ENCODE measurements at regions of chr7 and their contacts with region 1.

Region 1: DNA sequence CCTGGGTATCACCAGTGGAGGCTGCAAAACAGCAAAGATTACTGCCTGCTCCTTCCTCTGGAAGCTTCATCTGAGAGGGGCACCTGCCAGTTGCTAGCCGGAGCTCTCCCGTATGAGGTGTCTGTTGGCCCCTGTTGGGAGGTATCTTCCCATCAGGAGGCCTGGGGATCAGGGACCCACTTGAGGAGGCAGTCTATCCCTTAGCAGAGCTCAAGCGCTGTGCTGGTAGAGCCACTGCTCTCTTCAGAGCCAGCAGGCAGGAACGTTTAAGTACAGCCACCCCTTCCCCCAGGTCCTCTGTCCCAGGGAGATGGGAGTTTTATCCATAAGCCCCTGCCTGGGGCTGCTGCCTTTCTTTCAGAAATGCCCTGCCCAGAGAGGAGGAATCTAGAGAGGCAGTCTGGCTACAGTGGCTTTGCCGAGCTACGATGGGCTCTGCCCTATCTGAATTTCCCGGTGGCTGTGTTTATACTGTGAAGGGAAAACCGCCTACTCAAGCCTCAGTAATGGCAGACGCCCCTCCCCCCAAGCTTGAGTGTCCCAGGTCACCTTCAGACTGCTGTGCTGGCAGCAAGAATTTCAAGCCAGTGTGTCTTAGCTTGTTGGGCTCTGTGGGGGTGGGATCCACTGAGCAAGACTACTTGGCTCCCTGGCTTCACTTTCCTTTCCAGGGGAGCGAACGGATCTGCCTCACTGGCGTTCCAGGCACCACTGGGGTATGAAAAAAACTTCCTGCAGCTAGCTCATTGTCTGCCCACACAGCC is 19.6 kb downstream of the SEMA3E start:
- DNase-seq: no peak
- H3K4me3 ChIP-seq: peak overlapping the region in 1 of 3 donors; percentile 18
- H3K27ac ChIP-seq: no peak overlapping the region
- H3K4me1 ChIP-seq: no peaks in the 10 kb centered on the region
- H3K27me3 ChIP-seq: no peaks in the 10 kb centered on the region
- CTCF ChIP-seq: no peak
- POLR2A ChIP-seq: no peak

Region 2: DNA sequence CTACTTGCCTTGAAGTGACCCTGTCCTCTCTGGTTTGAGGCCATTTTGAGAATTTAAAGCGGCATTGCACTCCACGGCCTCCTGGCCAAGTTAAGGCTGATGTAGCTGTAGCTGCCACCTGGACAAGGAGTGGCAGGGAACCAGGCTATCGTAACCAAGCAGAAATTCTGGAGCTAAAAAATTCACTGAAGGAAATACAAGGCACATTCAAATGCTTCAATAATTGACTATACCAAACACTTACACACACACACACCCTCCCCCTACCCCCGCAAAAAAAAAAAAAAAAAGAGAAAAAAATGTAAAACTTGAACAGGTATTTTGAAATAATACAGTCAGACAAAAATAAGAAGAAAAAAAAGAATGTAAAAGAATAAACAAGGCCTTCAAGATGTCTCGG is 974.2 kb after region 1 on chr7:
- intact Hi-C with region 1: loop called (anchors 5 kb)
- DNase-seq: no peak
- H3K4me3 ChIP-seq: no peak overlapping the region
- H3K27ac ChIP-seq: no peak overlapping the region
- H3K4me1 ChIP-seq: no peaks in the 10 kb centered on the region
- H3K27me3 ChIP-seq: no peaks in the 10 kb centered on the region
- CTCF ChIP-seq: no peak
- POLR2A ChIP-seq: no peak